ENCODE measurements at regions of chr19 and their contacts with region 1.

Region 1: DNA sequence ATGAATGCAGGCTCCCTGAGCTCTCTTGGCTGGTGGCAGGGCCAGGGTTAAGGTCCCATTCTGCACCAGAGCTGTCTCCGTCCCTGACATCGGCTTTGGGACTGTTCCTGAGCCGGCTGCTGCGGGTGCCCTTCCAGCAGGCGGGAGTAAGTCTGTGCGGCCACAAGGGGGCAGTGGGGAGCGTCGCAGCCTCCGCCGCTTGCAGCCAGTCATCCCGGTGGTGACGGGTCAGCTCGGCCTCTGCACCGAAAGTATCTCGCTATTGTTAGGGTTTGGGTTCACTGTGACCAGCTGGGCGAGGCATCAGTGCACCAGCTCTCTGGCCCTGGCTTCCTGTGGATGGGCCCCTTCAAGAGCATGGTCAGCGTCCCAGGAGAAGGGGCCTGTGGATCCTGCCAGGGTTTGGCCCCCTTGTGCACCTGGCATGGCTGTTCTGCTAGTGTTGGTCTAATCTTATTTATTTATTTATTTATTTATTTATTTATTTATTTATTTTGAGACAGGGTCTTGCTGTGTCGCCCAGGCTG is 15.1 kb downstream of the NDUFB7 start:
- DNase-seq: peak; percentile 79
- ATAC-seq: peak; percentile 92
- H3K4me3 Mint-ChIP-seq: no peak overlapping the region
- H3K27ac Mint-ChIP-seq: no peak overlapping the region
- H3K4me1 Mint-ChIP-seq: peaks cover 44% of the 10 kb centered on the region
- H3K27me3 Mint-ChIP-seq: no peaks in the 10 kb centered on the region
- CTCF ChIP-seq: peak; percentile 97

Region 2: DNA sequence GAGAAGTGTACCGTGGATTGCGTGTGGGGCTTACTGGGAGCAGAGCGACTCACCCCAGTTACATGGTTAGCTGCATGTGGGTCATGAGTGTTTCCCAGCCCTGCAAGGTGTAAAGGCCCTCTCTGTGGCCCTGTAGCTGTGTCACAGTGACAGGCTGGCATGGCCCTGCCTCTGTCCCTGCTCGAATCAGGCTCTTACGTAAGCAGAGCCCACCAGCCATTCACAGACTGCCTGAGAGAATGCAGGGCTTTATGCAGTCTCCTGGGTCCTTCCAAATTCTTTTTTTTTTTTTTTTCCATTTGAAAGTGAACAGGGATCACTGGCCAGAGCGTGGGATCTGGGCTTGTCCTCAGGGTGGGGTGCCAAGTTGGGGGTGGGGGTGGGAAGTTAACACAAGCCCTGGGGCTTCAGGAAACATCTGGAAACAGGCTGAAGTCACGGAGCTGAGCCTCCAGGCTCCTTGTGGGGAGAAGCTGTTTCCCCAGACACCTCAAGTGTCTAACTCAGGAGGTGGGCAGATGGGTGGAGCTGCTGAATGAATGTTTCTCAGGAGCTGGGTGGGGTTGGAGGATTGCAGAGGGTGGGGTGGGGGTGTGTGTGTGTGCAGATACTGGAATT is 13.9 kb before region 1 on chr19:
- CTCF ChIA-PET with region 1: interaction called, 28 read pairs
- POLR2A ChIA-PET with region 1: no interaction called
- intact Hi-C with region 1: no loop called
- DNase-seq: no peak
- ATAC-seq: peak; percentile 53
- H3K4me3 Mint-ChIP-seq: no peak overlapping the region
- H3K27ac Mint-ChIP-seq: no peak overlapping the region
- H3K4me1 Mint-ChIP-seq: peaks cover 32% of the 10 kb centered on the region
- H3K27me3 Mint-ChIP-seq: no peaks in the 10 kb centered on the region
- CTCF ChIP-seq: no peak

Region 3: GRCh38 chr19:14571695-14572490 is 15.2 kb after region 1 on chr19 and contains the start of gene NDUFB7:
- CTCF ChIA-PET with region 1: interaction called, 19 read pairs
- POLR2A ChIA-PET with region 1: interaction called, 3 read pairs
- intact Hi-C with region 1: no loop called
- DNase-seq: peak; percentile 95
- ATAC-seq: peak; percentile 96
- H3K4me3 Mint-ChIP-seq: peak within 1 kb of the TSS; percentile 96
- H3K27ac Mint-ChIP-seq: peak within 1 kb of the TSS; percentile 91
- H3K4me1 Mint-ChIP-seq: peaks cover 39% of the 10 kb centered on the region
- H3K27me3 Mint-ChIP-seq: no peaks in the 10 kb centered on the region
- CTCF ChIP-seq: peak; percentile 65
- total RNA-seq, gene NDUFB7: 123 to 135 TPM

Region 4: GRCh38 chr19:14689598-14690503 is 133.1 kb after region 1 on chr19 and contains the start of gene ZNF333:
- CTCF ChIA-PET with region 1: interaction called, 28 read pairs
- POLR2A ChIA-PET with region 1: no interaction called
- intact Hi-C with region 1: no loop called
- DNase-seq: peak; percentile 100
- ATAC-seq: peak; percentile 93
- H3K4me3 Mint-ChIP-seq: peak within 1 kb of the TSS; percentile 92
- H3K27ac Mint-ChIP-seq: peak within 1 kb of the TSS; percentile 100
- H3K4me1 Mint-ChIP-seq: peaks cover 16% of the 10 kb centered on the region
- H3K27me3 Mint-ChIP-seq: no peaks in the 10 kb centered on the region
- CTCF ChIP-seq: no peak
- total RNA-seq, gene ZNF333: 12.2 to 14.0 TPM